Head of caudate nucleus (tissue), 42 donors: ENCODE measurements at regions of chr2 and their contacts with region 1.

Region 1: DNA sequence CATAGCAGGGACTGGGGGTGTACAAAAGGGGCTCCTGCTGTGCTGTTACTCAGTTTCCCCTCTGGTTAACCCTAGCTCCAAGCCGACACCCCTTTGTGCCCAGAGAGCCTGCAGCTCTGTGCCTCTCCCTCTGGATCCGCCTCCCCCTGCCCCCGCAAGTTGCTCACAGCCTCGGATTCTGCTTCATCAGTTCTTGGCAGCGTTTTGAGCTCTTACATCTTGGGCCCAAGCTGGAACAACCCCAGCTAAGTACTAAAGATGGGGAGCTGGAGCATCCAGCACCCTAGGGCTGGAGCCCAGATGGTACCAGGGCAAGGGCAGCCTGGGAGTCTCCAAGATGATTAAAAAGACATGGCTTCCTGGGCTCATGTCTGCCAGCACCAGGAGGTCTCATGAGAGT is 40.7 kb downstream of the POMC start:
- DNase-seq: peak in 39 of 42 donors; percentile 30 to 88 (median 64)

Region 2: GRCh38 chr2:25041928-25042320 is 85.7 kb before region 1 on chr2 and contains the start of gene EFR3B:
- intact Hi-C with region 1: loop called (anchors 10 kb)
- DNase-seq: peak; percentile 91 to 99 (median 97)

Region 3: DNA sequence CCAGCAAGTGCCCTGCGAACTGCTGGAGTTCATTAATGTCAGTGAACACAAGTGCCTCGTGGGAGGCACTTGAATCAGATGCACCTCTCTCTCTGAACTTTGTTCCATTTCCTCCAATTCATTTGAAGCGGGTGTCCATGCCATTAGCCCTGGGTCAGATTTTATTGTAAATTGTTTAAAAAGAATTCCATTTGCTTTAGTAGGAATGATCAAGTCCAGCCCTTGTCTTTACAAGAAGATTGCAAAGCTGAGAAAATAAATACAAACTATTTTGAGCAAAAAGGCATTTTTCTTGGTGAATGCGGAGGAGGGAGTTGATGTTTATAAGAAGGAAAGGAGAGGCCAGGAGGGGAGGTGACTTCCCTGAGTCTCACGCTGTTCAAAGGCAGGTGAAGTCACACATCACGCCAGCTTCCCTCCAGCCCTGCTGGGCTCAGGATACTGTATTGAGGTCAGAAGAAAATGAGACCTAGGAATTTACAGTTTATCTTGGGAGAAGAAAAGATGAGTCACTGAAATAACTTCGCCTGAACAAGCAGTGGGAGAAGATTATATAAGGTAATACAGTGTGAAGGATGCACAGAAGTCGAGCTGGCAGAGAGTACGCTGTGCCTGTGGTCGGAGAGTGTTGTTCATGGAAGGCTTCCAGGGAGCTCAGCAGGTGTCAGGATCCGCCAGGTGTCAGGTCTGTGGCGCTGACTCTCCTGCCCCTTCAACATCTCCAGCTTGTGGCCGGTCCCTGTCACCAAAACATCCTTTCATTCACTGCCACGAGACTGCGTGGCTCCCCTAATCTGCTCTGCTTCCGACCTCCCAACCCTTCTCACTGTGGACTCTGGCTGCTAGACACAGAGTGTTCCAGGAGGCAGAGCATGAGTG is 49.2 kb before region 1 on chr2:
- intact Hi-C with region 1: loop called (anchors 10 kb)
- DNase-seq: peak in 33 of 42 donors; percentile 20 to 79 (median 47)

Region 4: DNA sequence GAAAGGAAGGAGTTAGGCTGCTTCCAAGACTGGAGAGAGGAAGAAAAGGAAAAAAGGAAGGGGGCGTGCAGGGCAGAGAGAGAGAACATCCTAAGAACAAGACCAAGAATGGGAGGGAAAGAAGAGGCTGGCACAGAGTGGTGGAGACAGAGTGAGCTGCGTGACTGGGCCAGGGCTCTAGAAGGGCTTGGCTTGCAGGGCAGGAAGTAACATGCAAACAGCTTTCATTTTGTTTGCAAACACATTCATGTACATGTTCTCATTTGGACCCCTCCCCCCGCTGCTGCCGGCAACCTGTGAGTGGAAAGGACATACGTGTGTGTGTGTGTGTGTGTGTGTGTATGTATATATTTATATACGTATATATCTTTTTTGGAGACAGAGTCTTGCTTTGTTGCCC is 260.8 kb after region 1 on chr2:
- intact Hi-C with region 1: no loop called
- DNase-seq: peak in 2 of 42 donors; percentile 16 to 21